ENCODE measurements at regions of chr3 and their contacts with region 1.

Region 1: DNA sequence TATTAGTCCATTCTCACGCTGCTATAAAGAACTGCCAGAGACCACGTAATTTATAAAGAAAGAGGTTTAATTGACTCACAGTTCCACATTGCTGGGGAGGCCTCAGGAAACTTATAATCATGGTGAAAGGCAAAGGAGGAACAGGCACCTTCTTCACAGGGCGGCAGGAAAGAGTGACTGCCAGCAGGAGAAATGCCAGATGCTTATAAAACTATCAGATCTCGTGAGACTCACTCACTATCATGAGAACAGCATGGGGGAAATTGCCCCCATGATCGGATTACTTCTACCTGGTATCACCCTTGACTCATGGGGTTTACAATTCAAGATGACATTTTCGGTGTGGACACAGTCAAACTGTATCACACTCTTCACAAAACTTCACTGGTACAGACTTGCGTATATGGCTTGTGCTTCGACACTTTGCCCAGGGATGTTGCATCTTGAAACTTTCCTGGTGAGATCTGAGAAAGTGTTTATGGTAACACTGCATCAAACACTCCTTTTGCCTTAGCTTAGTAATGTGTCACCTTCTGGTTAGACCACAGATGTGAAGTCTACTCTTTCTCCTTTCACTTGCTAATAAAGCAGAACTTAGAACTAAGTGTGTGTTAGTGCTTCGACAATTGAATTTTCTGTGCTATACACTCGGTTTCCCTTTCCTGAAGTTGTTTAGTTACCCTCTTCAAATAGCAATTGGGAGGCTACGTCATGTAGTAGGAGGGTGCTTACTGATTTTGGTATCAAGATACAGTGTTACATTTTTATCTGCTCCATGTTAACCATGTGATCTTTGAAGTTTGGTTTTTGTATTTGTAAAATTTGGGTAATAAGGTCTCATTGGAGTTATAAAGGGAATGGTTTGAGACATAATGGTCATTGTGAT is 185.7 kb downstream of the LPP start:
- DNase-seq: peak; percentile 39
- H3K4me3 Mint-ChIP-seq: peak overlapping the region; percentile 63
- H3K27ac Mint-ChIP-seq: peak overlapping the region; percentile 86
- H3K4me1 Mint-ChIP-seq: peaks cover 37% of the 10 kb centered on the region
- H3K27me3 Mint-ChIP-seq: peaks cover 24% of the 10 kb centered on the region

Region 2: GRCh38 chr3:187974871-187975271 is 364.8 kb before region 1 on chr3:
- intact Hi-C with region 1: loop called (anchors 1 kb)
- DNase-seq: no peak
- H3K4me3 Mint-ChIP-seq: peak overlapping the region; percentile 59
- H3K27ac Mint-ChIP-seq: peak overlapping the region; percentile 94
- H3K4me1 Mint-ChIP-seq: peaks cover 62% of the 10 kb centered on the region
- H3K27me3 Mint-ChIP-seq: peaks cover 2% of the 10 kb centered on the region

Region 3: GRCh38 chr3:188284455-188285212 is 55.0 kb before region 1 on chr3:
- intact Hi-C with region 1: loop called (anchors 1 kb)
- DNase-seq: peak; percentile 26
- H3K4me3 Mint-ChIP-seq: peak overlapping the region; percentile 57
- H3K27ac Mint-ChIP-seq: peak overlapping the region; percentile 90
- H3K4me1 Mint-ChIP-seq: peaks cover 55% of the 10 kb centered on the region
- H3K27me3 Mint-ChIP-seq: peaks cover 2% of the 10 kb centered on the region

Region 4: GRCh38 chr3:188320757-188321156 is 18.9 kb before region 1 on chr3:
- intact Hi-C with region 1: loop called (anchors 1 kb)
- DNase-seq: no peak
- H3K4me3 Mint-ChIP-seq: no peak overlapping the region
- H3K27ac Mint-ChIP-seq: no peak overlapping the region
- H3K4me1 Mint-ChIP-seq: peaks cover 49% of the 10 kb centered on the region
- H3K27me3 Mint-ChIP-seq: peaks cover 1% of the 10 kb centered on the region

Region 5: GRCh38 chr3:188584162-188584529 is 244.5 kb after region 1 on chr3:
- intact Hi-C with region 1: loop called (anchors 1 kb)
- DNase-seq: no peak
- H3K4me3 Mint-ChIP-seq: no peak overlapping the region
- H3K27ac Mint-ChIP-seq: no peak overlapping the region
- H3K4me1 Mint-ChIP-seq: no peaks in the 10 kb centered on the region
- H3K27me3 Mint-ChIP-seq: no peaks in the 10 kb centered on the region

Region 6: GRCh38 chr3:188720636-188721035 is 381.0 kb after region 1 on chr3:
- intact Hi-C with region 1: loop called (anchors 1 kb)
- DNase-seq: no peak
- H3K4me3 Mint-ChIP-seq: no peak overlapping the region
- H3K27ac Mint-ChIP-seq: no peak overlapping the region
- H3K4me1 Mint-ChIP-seq: peaks cover 35% of the 10 kb centered on the region
- H3K27me3 Mint-ChIP-seq: peaks cover 2% of the 10 kb centered on the region

Region 7: GRCh38 chr3:188812198-188812597 is 472.5 kb after region 1 on chr3:
- intact Hi-C with region 1: no loop called
- DNase-seq: no peak
- H3K4me3 Mint-ChIP-seq: no peak overlapping the region
- H3K27ac Mint-ChIP-seq: no peak overlapping the region
- H3K4me1 Mint-ChIP-seq: no peaks in the 10 kb centered on the region
- H3K27me3 Mint-ChIP-seq: no peaks in the 10 kb centered on the region

Measured in activated T-helper 1 cell treated with anti-CD3 and anti-CD28 coated beads, Interleukin-12 subunit alpha, Interleukin-12 subunit beta, Interleukin-2, Interleukin-4 antibody, amounts not matched to agents 30 ng/mL and 10 ng/mL and 1 ng/mL, durations not matched to agents 14 hours and 24 hours and 36 hours (primary cell).